ENCODE measurements at regions of chr2 and their contacts with region 1.

Region 1: DNA sequence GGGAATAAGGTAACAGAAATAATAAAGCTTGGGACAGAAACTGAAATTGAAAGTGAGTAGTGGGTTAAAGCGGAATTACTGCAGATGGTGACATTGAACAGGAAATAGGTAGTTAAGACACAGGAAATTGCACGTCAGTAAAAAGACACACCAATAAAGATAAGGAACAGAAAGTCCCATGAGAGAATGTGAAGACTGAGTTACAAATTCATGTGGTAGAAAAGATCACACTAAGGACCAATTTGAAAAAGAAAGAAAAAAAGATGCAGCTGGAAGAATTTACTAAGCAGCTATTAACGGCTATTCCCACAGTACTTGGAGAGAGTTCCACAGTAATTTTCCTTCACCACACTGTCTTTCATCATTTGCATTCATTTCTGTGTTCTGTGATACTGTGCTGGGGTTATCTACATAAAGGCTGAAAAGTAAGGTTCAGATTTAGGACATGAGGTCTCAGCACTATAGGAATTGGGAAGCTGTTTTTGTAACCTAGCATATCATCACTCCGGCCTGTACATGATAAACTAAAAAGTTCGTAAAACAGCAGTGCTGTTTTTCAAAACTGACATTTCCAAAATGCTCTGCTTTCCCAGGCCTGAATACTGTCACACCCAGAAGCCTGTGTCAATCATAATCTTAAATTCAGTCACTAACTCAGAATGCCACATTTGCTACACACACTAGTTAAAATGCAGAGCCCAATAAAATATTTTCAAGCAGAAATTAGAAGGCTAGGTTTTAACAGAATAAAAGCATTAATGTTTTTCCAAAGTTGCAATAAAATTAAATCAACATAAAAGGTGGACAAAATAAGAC is 42.9 kb downstream of the SRBD1 start:
- DNase-seq: no peak
- H3K4me3 Mint-ChIP-seq: peak overlapping the region; percentile 73
- H3K27ac Mint-ChIP-seq: peak overlapping the region; percentile 95
- H3K4me1 Mint-ChIP-seq: peaks cover 21% of the 10 kb centered on the region
- H3K27me3 Mint-ChIP-seq: no peaks in the 10 kb centered on the region

Region 2: DNA sequence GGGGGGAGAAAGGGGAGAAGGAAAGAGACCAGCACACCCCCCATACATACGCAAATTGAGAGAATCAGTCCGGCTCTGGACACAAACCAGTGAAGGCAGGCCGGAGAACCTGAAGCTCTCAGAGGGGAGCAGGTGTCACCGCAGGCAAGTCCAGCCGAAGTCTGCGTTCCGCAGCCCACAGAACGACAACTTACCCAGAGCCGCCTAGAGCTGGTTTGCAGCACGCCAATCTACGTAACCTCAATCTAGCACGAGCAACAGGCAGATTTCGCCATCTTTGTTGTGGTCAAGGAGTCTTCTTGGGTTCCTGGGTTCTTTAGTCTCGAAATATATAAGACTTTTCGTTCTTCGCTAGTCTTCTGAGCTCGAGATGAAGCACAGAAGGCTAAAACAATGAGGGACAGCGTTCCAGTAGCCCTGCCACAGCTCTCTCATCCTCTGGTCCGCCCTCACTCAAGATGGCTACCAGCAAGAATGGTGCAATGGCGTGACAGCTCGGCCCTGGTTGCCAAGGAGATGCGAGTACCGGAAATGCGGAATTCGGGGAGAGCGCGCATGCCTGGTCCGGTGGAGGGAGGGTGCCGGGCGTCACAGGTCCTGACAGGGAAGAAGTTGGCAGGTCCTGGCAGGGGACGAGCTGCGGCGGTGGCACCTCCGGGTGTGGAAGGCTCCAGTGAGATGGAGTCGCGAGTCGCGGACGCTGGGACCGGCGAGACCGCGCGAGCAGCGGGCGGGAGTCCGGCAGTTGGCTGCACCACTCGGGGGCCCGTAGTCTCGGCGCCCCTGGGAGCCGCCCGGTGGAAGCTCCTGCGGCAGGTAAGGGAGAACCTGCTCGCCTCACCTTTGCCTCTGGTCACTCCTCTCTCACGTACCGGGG is 1206.6 kb before region 1 on chr2 and contains the starts of genes CAMKMT and PREPL:
- CTCF ChIA-PET with region 1: no interaction called
- intact Hi-C with region 1: loop called (anchors 5 kb)
- DNase-seq: peak; percentile 99
- H3K4me3 Mint-ChIP-seq: peak within 1 kb of the TSS; percentile 97
- H3K27ac Mint-ChIP-seq: peak within 1 kb of the TSS; percentile 99
- H3K4me1 Mint-ChIP-seq: peaks cover 42% of the 10 kb centered on the region
- H3K27me3 Mint-ChIP-seq: no peaks in the 10 kb centered on the region
- total RNA-seq, gene CAMKMT: 12.8 to 19.6 TPM
- total RNA-seq, gene PREPL: 27.8 to 29.6 TPM

Region 3: GRCh38 chr2:45494269-45494977 is 73.8 kb before region 1 on chr2:
- CTCF ChIA-PET with region 1: no interaction called
- intact Hi-C with region 1: loop called (anchors 1 kb)
- DNase-seq: no peak
- H3K4me3 Mint-ChIP-seq: no peak overlapping the region
- H3K27ac Mint-ChIP-seq: no peak overlapping the region
- H3K4me1 Mint-ChIP-seq: peaks cover 30% of the 10 kb centered on the region
- H3K27me3 Mint-ChIP-seq: no peaks in the 10 kb centered on the region

Region 4: DNA sequence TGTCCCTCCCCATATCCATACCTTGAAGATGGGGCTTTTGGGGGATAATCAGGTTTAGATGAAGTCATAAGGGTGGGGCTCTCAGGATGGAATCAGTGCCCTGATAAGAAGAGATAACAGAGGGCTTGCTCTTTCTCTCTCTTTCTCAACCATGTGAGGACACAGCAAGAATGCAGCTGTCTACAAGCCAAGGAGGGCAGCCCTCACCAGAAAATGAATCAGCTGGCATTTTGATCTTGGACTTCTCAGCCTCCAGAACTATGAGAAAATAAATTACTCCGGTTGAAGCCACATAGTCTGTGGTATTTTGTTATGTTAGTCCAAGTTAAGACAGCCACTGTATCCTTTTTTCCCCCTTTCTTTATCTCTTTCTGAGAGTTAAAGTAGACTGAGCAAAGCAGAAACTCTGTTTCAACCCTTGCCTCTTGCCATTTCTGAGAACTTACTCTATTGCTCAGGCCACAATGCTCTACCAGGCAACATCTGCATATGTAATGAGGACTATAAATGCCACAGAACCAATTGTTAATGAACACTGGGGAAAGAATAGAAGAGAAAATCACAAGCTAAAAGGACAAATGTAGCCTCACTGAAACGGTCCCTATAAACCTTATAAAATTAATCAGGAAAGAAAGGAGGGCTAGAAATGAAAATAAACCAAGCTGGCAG is 14.0 kb before region 1 on chr2:
- CTCF ChIA-PET with region 1: no interaction called
- intact Hi-C with region 1: loop called (anchors 1 kb)
- DNase-seq: no peak
- H3K4me3 Mint-ChIP-seq: no peak overlapping the region
- H3K27ac Mint-ChIP-seq: peak overlapping the region; percentile 53
- H3K4me1 Mint-ChIP-seq: peaks cover 20% of the 10 kb centered on the region
- H3K27me3 Mint-ChIP-seq: no peaks in the 10 kb centered on the region

Region 5: DNA sequence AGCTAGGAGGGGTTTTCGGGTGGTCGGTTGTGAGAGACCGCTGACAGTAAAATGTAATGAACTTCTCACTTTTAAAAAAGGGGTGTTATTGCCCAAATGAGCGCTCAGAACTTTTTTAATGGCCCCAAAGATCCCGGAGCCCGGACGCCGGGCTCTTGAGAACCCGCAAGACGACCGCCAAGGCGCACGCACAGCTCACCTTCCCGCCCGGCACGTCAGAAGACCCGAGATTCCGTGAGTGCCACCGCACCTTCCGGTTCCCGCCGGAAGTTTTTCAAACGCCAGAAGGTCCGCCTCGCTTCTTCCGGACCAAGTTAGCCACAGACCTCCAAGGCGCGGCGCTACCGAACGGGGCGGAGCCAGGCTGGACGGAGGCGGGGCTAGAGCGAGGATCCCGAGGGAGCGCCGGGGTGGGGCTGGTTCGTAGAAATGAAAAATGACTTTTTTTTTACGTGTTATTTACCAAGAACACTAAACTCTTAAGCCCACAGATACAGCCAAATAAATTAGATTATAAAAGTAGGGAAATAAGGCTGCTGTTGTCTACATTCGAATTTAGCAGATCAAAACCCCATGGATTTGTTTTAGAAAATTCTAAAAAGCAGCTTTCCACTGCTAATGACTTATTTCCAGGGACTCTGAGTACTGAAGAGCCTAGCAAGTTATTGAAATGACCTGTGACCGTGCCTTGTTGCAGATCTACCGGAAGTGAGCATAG is 43.0 kb after region 1 on chr2 and contains the start of gene SRBD1:
- CTCF ChIA-PET with region 1: interaction called, 4 read pairs
- intact Hi-C with region 1: loop called (anchors 1 kb)
- DNase-seq: peak; percentile 96
- H3K4me3 Mint-ChIP-seq: peak within 1 kb of the TSS; percentile 98
- H3K27ac Mint-ChIP-seq: peak within 1 kb of the TSS; percentile 98
- H3K4me1 Mint-ChIP-seq: peaks cover 19% of the 10 kb centered on the region
- H3K27me3 Mint-ChIP-seq: no peaks in the 10 kb centered on the region
- total RNA-seq, gene SRBD1: 21.3 to 22.6 TPM

Region 6: DNA sequence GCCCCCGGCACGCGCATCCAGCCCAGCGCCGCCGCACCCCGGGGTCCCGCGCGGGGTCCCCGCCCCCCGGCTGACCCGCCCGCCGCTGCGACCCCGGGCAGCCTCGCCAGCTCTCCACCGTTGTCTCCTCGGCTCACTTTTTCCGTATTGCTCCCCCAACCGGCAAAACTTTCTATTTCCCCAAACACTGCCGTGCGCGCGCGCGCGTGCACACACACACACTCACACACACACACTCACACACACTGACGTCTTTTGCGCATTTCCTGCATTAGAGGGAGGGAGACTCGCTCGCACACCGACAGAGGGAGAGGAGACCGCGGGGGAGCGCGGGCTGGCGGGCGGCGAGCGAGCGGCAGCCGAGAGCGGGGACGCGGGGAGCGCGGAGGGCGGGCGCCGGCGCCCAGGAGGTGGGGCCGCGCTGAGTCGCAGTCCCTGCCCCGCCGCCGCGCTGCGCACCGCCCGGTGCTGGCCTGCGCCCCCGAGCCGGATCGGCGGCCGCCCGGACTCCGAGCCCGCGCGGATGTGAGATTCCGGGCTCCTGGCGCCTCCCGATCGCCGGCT is 82.8 kb after region 1 on chr2:
- CTCF ChIA-PET with region 1: no interaction called
- intact Hi-C with region 1: loop called (anchors 1 kb)
- DNase-seq: peak; percentile 93
- H3K4me3 Mint-ChIP-seq: peak overlapping the region; percentile 95
- H3K27ac Mint-ChIP-seq: peak overlapping the region; percentile 91
- H3K4me1 Mint-ChIP-seq: peaks cover 22% of the 10 kb centered on the region
- H3K27me3 Mint-ChIP-seq: peaks cover 3% of the 10 kb centered on the region

Region 7: GRCh38 chr2:45664635-45665261 is 96.6 kb after region 1 on chr2:
- CTCF ChIA-PET with region 1: no interaction called
- intact Hi-C with region 1: no loop called
- DNase-seq: no peak
- H3K4me3 Mint-ChIP-seq: no peak overlapping the region
- H3K27ac Mint-ChIP-seq: no peak overlapping the region
- H3K4me1 Mint-ChIP-seq: peaks cover 7% of the 10 kb centered on the region
- H3K27me3 Mint-ChIP-seq: no peaks in the 10 kb centered on the region

Measured in activated naive CD4-positive, alpha-beta T cell treated with anti-CD3 and anti-CD28 coated beads for 36 hours (primary cell).